MCF 10A (cell line): ENCODE measurements at regions of chr17 and their contacts with region 1.

Region 1: GRCh38 chr17:32486111-32486700 is 587 bp upstream of the CDK5R1 start:
- DNase-seq: peak; percentile 75
- H3K4me3 Mint-ChIP-seq: peak overlapping the region; percentile 80
- H3K27ac Mint-ChIP-seq: no peak overlapping the region
- H3K4me1 Mint-ChIP-seq: peaks cover 20% of the 10 kb centered on the region
- H3K27me3 Mint-ChIP-seq: no peaks in the 10 kb centered on the region
- CTCF ChIP-seq: no peak

Region 2: DNA sequence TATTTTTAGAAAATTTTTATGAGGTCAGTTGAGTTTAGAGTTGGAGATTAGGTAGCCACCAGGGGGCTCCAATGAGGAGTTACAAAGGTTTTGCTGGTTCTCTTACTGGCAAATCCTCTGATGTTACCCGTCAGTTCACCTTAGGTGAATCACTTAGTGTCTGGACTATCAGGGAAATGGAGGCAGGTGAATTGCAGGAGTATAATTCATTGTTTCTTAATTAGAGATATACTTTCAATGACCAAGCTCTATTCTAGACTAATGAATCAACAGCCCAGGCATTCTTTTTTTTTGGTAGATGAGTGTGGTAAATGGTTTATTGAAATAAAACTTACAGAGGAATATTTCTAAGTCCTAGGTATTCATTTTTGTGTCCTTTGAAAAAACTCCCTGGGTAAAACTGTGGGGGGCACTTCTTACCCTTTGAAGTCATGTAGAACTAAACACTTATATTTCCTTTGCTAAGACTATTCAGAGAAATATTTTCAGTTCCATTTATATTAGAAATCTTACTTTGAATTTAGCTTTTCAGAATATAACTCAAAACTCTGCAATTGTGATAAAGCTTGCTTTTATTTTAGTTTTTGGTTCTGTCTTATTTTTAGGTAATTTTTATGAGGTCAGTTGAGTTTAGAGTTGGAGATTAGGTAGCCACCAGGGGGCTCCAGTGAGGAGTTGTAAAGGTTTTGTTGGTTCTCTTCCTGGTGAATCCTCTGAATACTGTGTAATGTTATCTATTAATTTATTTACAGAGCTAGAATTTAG is 24.2 kb before region 1 on chr17:
- CTCF ChIA-PET with region 1: interaction called, 39 read pairs
- POLR2A ChIA-PET with region 1: interaction called, 5 read pairs
- intact Hi-C with region 1: no loop called
- DNase-seq: peak; percentile 78
- H3K4me3 Mint-ChIP-seq: no peak overlapping the region
- H3K27ac Mint-ChIP-seq: no peak overlapping the region
- H3K4me1 Mint-ChIP-seq: peaks cover 6% of the 10 kb centered on the region
- H3K27me3 Mint-ChIP-seq: no peaks in the 10 kb centered on the region
- CTCF ChIP-seq: peak; percentile 53

Region 3: GRCh38 chr17:32609085-32609484 is 122.9 kb after region 1 on chr17:
- CTCF ChIA-PET with region 1: interaction called, 5 read pairs
- POLR2A ChIA-PET with region 1: no interaction called
- intact Hi-C with region 1: loop called (anchors 1 kb)
- DNase-seq: peak; percentile 68
- H3K4me3 Mint-ChIP-seq: no peak overlapping the region
- H3K27ac Mint-ChIP-seq: no peak overlapping the region
- H3K4me1 Mint-ChIP-seq: peaks cover 9% of the 10 kb centered on the region
- H3K27me3 Mint-ChIP-seq: no peaks in the 10 kb centered on the region
- CTCF ChIP-seq: peak; percentile 45

Region 4: GRCh38 chr17:32701871-32702270 is 215.7 kb after region 1 on chr17:
- CTCF ChIA-PET with region 1: no interaction called
- POLR2A ChIA-PET with region 1: no interaction called
- intact Hi-C with region 1: no loop called
- DNase-seq: no peak
- H3K4me3 Mint-ChIP-seq: no peak overlapping the region
- H3K27ac Mint-ChIP-seq: no peak overlapping the region
- H3K4me1 Mint-ChIP-seq: no peaks in the 10 kb centered on the region
- H3K27me3 Mint-ChIP-seq: no peaks in the 10 kb centered on the region
- CTCF ChIP-seq: no peak

Region 5: DNA sequence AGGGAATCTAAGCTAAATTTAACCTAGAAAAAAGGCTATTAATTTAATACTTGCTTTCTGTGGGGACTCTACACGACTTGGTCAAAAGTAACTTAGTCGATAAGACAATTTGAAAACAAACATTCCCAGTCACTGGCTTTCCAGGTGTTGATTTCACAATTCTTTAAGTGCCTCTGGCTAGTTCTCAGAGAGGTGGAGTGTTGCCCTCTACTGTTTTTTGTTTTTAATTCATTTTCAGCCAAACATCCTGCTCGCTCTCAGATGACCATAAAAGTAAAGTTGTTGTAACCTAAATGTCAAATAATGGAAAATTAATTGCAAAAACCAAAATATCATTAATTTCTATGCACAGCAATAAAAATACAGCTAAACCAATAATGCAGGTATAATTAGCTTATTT is 283.6 kb after region 1 on chr17:
- CTCF ChIA-PET with region 1: interaction called, 16 read pairs
- POLR2A ChIA-PET with region 1: interaction called, 3 read pairs
- intact Hi-C with region 1: no loop called
- DNase-seq: peak; percentile 71
- H3K4me3 Mint-ChIP-seq: no peak overlapping the region
- H3K27ac Mint-ChIP-seq: no peak overlapping the region
- H3K4me1 Mint-ChIP-seq: no peaks in the 10 kb centered on the region
- H3K27me3 Mint-ChIP-seq: no peaks in the 10 kb centered on the region
- CTCF ChIP-seq: peak; percentile 49